Activated naive CD4-positive, alpha-beta T cell treated with anti-CD3 and anti-CD28 coated beads for 36 hours (primary cell): ENCODE measurements at regions of chr10 and their contacts with region 1.

Region 1: DNA sequence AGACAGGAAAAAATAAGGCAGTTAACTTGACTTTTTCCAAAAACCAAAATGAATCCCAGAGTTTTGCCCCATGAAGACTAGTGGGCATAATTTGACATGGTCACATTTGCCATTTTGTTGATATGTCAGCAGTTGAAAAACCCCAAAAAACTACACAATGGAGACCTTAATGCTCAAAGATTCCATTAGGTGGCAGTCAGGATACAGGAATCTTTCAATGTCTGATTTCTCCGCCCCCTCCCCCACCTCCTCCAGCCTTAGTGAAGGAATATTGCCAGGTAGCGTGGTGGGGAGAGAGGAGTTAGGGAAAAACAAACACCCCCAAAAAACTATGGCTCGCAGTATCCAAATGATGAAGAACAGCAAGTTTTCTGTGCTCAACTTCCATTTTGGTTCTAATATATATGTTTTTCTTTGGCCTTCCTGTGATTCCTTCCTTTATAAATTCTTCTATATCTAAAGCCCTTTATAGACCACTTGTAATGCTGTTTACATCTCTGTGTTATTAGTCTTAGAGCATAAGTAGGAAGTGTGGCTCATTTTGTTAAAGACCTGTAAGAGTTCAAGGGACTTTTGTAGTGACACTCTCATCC is 6.7 kb upstream of the SMNDC1 start:
- DNase-seq: peak; percentile 61
- H3K4me3 Mint-ChIP-seq: no peak overlapping the region
- H3K27ac Mint-ChIP-seq: no peak overlapping the region
- H3K4me1 Mint-ChIP-seq: peaks cover 28% of the 10 kb centered on the region
- H3K27me3 Mint-ChIP-seq: no peaks in the 10 kb centered on the region

Region 2: GRCh38 chr10:110285501-110285900 is 26.0 kb before region 1 on chr10:
- CTCF ChIA-PET with region 1: no interaction called
- intact Hi-C with region 1: no loop called
- DNase-seq: no peak
- H3K4me3 Mint-ChIP-seq: no peak overlapping the region
- H3K27ac Mint-ChIP-seq: no peak overlapping the region
- H3K4me1 Mint-ChIP-seq: no peaks in the 10 kb centered on the region
- H3K27me3 Mint-ChIP-seq: no peaks in the 10 kb centered on the region

Region 3: DNA sequence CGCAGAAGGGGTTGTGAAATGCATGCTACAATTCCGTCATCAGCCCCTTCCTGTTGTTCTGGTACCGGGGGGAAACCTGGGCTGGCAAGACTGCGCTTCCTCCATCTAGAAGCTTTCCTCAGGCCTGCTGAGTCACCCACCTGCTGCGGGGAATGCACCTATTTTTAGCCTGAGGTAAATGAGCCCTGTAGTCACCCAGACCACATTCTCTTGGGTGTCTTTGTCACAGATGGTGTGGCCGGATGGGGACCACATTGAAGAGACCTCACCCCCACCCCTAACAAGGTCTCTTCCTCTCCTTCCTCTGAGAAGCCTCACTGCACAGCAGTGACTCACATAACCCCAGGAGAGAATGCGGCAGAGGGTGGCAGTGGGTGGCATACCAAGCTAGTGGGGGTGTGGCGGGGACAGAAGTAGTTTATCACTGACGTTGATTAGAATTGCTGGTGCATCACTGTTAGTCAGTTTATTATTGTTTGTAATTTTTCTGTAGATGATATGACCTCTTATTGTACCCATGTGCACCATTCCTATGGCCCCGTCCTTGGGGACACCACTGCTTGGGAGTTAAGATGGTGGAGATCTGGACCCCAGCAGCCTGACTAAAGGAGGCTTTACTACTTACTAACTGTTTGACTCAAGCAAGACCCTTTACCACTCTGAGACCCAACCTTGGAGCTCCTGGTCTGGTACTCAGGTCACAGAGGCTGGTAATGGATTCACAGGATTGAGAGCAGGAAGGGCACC is 103.3 kb after region 1 on chr10:
- CTCF ChIA-PET with region 1: no interaction called
- intact Hi-C with region 1: loop called (anchors 1 kb)
- DNase-seq: peak; percentile 98
- H3K4me3 Mint-ChIP-seq: peak overlapping the region; percentile 41
- H3K27ac Mint-ChIP-seq: peak overlapping the region; percentile 84
- H3K4me1 Mint-ChIP-seq: peaks cover 73% of the 10 kb centered on the region
- H3K27me3 Mint-ChIP-seq: no peaks in the 10 kb centered on the region

Region 4: GRCh38 chr10:110497438-110498086 is 186.1 kb after region 1 on chr10 and contains the start of gene DUSP5:
- CTCF ChIA-PET with region 1: interaction called, 5 read pairs
- intact Hi-C with region 1: loop called (anchors 1 kb)
- DNase-seq: peak; percentile 94
- H3K4me3 Mint-ChIP-seq: peak within 1 kb of the TSS; percentile 97
- H3K27ac Mint-ChIP-seq: peak within 1 kb of the TSS; percentile 94
- H3K4me1 Mint-ChIP-seq: peaks cover 43% of the 10 kb centered on the region
- H3K27me3 Mint-ChIP-seq: no peaks in the 10 kb centered on the region
- total RNA-seq, gene DUSP5: 51.0 to 53.5 TPM

Region 5: DNA sequence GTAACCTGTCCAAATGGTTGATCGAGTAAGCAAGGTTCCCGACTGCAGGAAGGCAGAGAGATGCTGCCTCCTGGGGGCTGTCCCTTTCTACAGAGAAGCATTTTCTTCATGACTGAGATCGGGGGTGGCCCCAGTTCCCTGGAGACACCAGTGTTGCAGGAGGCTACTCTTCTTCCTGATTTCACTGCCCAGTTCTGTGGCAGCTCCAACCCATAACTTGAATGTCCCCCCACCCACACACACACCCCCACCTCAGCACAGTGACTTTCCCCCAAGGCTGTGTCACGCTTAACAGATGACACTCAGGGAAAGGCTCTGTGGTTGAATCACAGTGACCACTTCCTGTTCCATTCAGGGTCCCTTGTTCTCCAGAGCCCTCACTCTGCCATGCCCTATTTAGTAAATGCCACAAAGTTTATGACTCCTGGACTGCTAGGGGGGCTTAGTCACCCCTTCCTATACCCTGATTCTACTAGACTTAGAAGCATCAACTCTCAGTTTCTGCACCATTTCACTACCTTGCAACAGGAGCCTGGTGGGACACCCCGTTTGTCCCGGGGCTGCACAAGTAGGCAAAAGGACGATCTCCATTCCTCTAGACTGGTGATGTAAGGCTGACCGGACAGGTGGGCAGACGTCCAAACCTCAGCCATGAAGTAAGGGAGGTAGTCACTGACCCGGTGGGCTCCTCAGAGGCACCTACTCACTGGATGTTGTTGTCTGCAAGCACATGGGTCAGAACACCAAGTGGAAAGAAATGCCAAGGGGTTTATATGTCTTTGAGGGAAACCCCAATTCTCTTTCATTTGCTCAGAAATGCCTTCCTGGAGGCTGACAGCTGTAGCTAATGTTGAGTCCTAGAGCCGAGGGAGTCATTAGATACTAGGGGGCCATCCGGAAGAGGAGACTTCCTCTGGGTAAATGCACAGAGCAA is 224.8 kb after region 1 on chr10:
- CTCF ChIA-PET with region 1: interaction called, 5 read pairs
- intact Hi-C with region 1: loop called (anchors 1 kb)
- DNase-seq: peak; percentile 90
- H3K4me3 Mint-ChIP-seq: no peak overlapping the region
- H3K27ac Mint-ChIP-seq: peak overlapping the region; percentile 54
- H3K4me1 Mint-ChIP-seq: peaks cover 22% of the 10 kb centered on the region
- H3K27me3 Mint-ChIP-seq: no peaks in the 10 kb centered on the region

Region 6: DNA sequence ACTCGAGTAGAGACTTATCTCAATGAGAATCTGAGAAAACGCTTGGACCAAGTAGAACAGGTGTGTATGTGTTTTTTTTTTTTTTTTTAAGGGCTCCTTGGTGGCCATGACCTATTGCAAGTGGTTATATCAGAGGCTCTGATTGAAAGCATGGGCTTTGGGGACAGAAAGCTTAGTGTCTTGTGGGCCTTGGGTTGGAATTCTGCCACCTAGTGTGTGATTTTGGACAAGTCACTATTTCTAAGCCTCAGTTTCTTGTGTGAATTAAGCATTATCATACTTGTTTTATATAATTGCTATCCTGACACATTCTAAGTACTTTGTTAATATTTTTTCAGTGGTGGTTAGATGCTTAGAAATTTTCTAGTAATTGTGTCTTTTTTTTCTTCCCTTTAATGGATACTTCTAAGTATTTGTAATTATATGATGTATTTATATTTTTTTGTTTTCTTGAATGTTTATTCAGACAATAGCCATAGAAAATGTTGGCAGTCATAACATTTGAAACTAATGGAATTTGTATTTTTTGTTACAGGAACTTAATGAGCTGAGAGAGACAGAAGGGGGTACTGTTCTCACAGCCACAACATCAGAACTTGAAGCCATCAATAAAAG is 289.1 kb after region 1 on chr10:
- CTCF ChIA-PET with region 1: interaction called, 14 read pairs
- intact Hi-C with region 1: loop called (anchors 1 kb)
- DNase-seq: peak; percentile 42
- H3K4me3 Mint-ChIP-seq: no peak overlapping the region
- H3K27ac Mint-ChIP-seq: no peak overlapping the region
- H3K4me1 Mint-ChIP-seq: no peaks in the 10 kb centered on the region
- H3K27me3 Mint-ChIP-seq: no peaks in the 10 kb centered on the region

Region 7: DNA sequence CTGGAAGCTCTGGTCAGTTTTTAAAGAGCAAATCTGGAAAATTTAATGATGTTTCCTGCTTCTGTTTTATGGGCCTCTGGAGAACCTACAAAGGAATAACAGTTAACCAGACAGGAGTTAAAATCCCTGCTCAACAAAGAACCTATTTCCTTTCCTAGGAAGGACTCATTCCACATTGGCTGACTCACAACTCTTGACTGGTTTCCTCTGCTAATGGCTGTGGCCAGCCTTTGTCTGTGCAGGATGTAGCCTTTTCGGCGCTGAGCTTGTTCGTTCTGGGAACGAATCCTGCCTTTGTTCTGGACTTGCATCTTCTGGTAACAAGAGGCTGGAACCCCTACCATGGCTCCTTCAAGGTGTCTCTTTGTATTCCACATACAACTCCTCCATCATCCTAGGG is 447.4 kb after region 1 on chr10:
- CTCF ChIA-PET with region 1: no interaction called
- intact Hi-C with region 1: no loop called
- DNase-seq: no peak
- H3K4me3 Mint-ChIP-seq: no peak overlapping the region
- H3K27ac Mint-ChIP-seq: no peak overlapping the region
- H3K4me1 Mint-ChIP-seq: peaks cover 12% of the 10 kb centered on the region
- H3K27me3 Mint-ChIP-seq: no peaks in the 10 kb centered on the region